ENCODE measurements at regions of chr1 and their contacts with region 1.

Region 1: GRCh38 chr1:98468111-98468717 is 193.3 kb upstream of the SNX7 start:
- DNase-seq: no peak
- H3K4me3 Mint-ChIP-seq: no peak overlapping the region
- H3K27ac Mint-ChIP-seq: no peak overlapping the region
- H3K4me1 Mint-ChIP-seq: no peaks in the 10 kb centered on the region
- H3K27me3 Mint-ChIP-seq: peaks cover 13% of the 10 kb centered on the region

Region 2: GRCh38 chr1:98053471-98054366 is 414.5 kb before region 1 on chr1:
- CTCF ChIA-PET with region 1: interaction called, 18 read pairs
- POLR2A ChIA-PET with region 1: no interaction called
- DNase-seq: peak; percentile 64
- H3K4me3 Mint-ChIP-seq: peak overlapping the region; percentile 58
- H3K27ac Mint-ChIP-seq: no peak overlapping the region
- H3K4me1 Mint-ChIP-seq: peaks cover 23% of the 10 kb centered on the region
- H3K27me3 Mint-ChIP-seq: peaks cover 71% of the 10 kb centered on the region

Measured in activated CD4-positive, alpha-beta memory T cell treated with anti-CD3 and anti-CD28 coated beads, Interleukin-2, amount 10 ng/mL, durations not matched to agents 7 days and 5 days (primary cell).